HepG2 (cell line): ENCODE measurements at regions of chr9 and their contacts with region 1.

Region 1: DNA sequence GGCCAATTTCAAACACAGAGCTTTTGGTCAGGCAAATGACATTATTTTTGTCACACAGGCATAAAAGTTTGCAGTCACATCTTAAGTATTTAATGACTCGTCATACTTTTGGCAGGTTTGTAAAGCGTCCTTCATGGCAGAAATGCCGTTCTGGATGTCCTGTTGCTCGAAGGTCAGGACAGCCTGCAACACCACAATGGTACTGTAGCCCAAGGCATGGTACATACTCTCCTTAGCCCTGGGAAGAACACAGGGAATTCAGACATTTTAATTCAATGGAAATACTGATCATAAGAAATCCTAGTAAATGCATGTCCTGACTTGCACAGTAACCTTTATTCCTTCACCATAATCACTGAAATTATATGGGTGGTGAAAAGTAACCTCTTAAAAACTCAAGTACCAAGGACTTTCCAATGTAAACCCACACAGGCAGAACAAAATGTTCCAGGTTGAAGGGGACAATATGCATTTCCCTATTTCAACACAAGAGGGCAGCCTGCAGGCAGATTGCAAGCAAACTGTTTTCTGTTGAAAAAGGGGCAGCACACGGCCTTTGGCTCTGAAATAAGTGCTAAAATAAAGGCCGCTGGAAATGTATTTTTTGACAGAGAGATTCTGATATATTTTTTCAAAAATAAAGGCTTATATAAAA is 95.7 kb downstream of the TTC39B start:
- DNase-seq: peak; percentile 70
- ATAC-seq: peak; percentile 77
- H3K4me3 ChIP-seq: no peak overlapping the region
- H3K27ac ChIP-seq: peak overlapping the region; percentile 48
- H3K4me1 ChIP-seq: peaks cover 36% of the 10 kb centered on the region
- H3K27me3 ChIP-seq: no peaks in the 10 kb centered on the region
- CTCF ChIP-seq: peak; percentile 81
- EP300 ChIP-seq: no peak
- POLR2A ChIP-seq: no peak
- RAD21 ChIP-seq: peak; percentile 61

Region 2: DNA sequence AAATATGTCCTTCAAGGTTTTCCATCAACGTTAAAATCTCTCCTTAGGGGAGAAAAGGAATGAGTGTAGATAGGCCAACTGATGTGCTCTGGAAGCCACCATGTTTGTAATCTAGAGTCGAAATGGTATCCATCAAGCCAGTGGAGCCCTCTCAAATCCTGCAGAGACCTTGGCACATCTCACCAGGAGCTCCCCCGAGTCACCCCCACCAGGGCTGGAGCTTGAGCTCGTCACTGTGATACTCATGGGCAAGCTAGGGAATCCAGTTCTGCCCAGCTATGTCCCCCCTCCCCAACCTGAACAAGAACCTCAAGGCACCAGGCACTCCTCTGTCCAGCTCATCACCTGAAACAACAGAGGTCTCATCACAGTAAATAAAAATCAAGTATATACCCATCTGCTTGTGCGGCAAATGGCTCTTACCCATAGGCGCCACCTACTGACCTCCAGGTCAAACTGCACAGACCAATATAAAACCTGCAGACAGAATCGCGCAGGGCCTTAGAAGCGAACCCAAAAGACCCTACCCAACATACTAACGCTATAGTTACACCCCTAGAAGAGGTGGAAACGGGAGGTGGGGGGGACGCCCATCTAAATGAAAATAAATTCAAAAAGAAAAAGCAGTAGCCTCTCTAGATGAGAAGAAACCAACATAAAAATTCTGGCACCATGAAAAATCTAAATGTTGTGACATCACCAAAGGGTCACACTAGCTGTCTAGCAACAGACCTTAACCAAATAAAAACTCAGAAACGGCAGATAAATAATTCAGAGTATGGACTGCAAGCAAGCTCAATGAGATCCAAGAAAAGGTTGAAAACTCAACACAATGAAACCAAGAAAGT is 20.7 kb after region 1 on chr9:
- CTCF ChIA-PET with region 1: interaction called, 4 read pairs
- POLR2A ChIA-PET with region 1: no interaction called
- in situ Hi-C with region 1: no loop called
- intact Hi-C with region 1: loop called (anchors 1 kb)
- DNase-seq: peak; percentile 22
- ATAC-seq: peak; percentile 73
- H3K4me3 ChIP-seq: no peak overlapping the region
- H3K27ac ChIP-seq: no peak overlapping the region
- H3K4me1 ChIP-seq: no peaks in the 10 kb centered on the region
- H3K27me3 ChIP-seq: no peaks in the 10 kb centered on the region
- CTCF ChIP-seq: peak; percentile 63
- EP300 ChIP-seq: no peak
- POLR2A ChIP-seq: no peak
- RAD21 ChIP-seq: no peak

Region 3: GRCh38 chr9:15357050-15357653 is 145.9 kb after region 1 on chr9:
- CTCF ChIA-PET with region 1: interaction called, 10 read pairs
- POLR2A ChIA-PET with region 1: no interaction called
- in situ Hi-C with region 1: no loop called
- intact Hi-C with region 1: loop called (anchors 2 kb)
- DNase-seq: peak; percentile 60
- ATAC-seq: peak; percentile 97
- H3K4me3 ChIP-seq: no peak overlapping the region
- H3K27ac ChIP-seq: peak overlapping the region; percentile 42
- H3K4me1 ChIP-seq: peaks cover 64% of the 10 kb centered on the region
- H3K27me3 ChIP-seq: no peaks in the 10 kb centered on the region
- CTCF ChIP-seq: peak; percentile 68
- EP300 ChIP-seq: no peak
- POLR2A ChIP-seq: no peak
- RAD21 ChIP-seq: peak; percentile 59

Region 4: DNA sequence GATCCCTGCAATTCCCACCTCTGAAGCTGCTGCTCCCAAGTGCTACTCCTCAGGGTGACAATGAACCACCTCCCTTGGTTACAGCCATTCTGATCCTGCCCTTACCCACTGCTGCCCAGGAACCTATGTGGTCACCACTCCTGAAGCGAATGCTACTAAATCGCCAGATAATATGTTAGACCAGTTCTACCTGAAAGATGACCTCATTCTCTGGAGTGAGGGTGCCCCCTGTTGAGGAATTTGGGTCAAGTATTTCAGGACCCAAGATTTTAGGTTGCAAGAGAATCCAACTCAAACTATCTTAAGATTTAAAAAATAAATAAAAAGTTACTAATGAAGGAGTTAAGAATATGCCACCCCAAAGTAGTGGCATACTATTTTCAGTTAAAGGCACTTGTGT is 205.6 kb after region 1 on chr9:
- CTCF ChIA-PET with region 1: interaction called, 17 read pairs
- POLR2A ChIA-PET with region 1: no interaction called
- in situ Hi-C with region 1: no loop called
- intact Hi-C with region 1: loop called (anchors 1 kb)
- DNase-seq: peak; percentile 56
- ATAC-seq: peak; percentile 80
- H3K4me3 ChIP-seq: no peak overlapping the region
- H3K27ac ChIP-seq: no peak overlapping the region
- H3K4me1 ChIP-seq: peaks cover 22% of the 10 kb centered on the region
- H3K27me3 ChIP-seq: no peaks in the 10 kb centered on the region
- CTCF ChIP-seq: peak; percentile 78
- EP300 ChIP-seq: no peak
- POLR2A ChIP-seq: no peak
- RAD21 ChIP-seq: peak; percentile 48; the same call in 1 of the 2 replicates